H1 (cell line): ENCODE measurements at regions of chr4 and their contacts with region 1.

Region 1: DNA sequence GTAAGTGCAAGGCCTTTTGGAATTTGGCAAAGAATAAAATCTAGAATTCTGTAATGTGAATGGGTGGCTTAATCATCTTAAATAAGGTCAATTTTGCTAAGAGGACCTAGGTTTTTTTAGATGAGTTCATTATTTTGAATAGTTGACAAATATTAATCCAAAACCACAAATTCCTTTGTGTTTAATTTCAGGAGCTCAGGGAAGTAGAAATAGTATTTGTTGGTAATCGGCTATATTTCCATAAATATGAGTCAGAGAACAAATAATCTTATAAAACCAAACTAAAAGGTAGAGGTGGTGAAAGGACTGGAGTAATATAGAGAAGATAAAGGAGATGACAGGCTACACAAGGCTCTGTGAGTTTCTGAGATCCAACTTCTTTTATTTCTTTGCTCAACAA is 190.4 kb upstream of the TLL1 start:
- DNase-seq: no peak
- H3K4me3 ChIP-seq: no peak overlapping the region
- H3K27ac ChIP-seq: no peak overlapping the region
- H3K4me1 ChIP-seq: no peaks in the 10 kb centered on the region; a peak in 1 of 7 replicates
- H3K27me3 ChIP-seq: no peaks in the 10 kb centered on the region
- CTCF ChIP-seq: no peak
- EP300 ChIP-seq: no peak
- POLR2A ChIP-seq: no peak
- RAD21 ChIP-seq: no peak

Region 2: GRCh38 chr4:165656829-165657490 is 25.7 kb before region 1 on chr4:
- CTCF ChIA-PET with region 1: no interaction called
- POLR2A ChIA-PET with region 1: no interaction called
- DNase-seq: peak in 1 of 2 experiments; percentile 17
- H3K4me3 ChIP-seq: peak overlapping the region in 1 of 4 experiments; percentile 29; a peak in 1 of 8 replicates
- H3K27ac ChIP-seq: no peak overlapping the region
- H3K4me1 ChIP-seq: peaks cover 0 to 9% (median 1%) of the 10 kb centered on the region in 4 experiments; a peak in 2 of 7 replicates
- H3K27me3 ChIP-seq: no peaks in the 10 kb centered on the region
- CTCF ChIP-seq: no peak
- EP300 ChIP-seq: no peak; a peak in 1 of 3 replicates
- POLR2A ChIP-seq: no peak
- RAD21 ChIP-seq: no peak

Region 3: GRCh38 chr4:165668694-165669093 is 13.9 kb before region 1 on chr4:
- CTCF ChIA-PET with region 1: interaction called, 14 read pairs
- POLR2A ChIA-PET with region 1: no interaction called
- DNase-seq: no peak
- H3K4me3 ChIP-seq: no peak overlapping the region
- H3K27ac ChIP-seq: no peak overlapping the region
- H3K4me1 ChIP-seq: peaks cover 0 to 5% (median 3%) of the 10 kb centered on the region in 4 experiments; a peak in 2 of 7 replicates
- H3K27me3 ChIP-seq: no peaks in the 10 kb centered on the region
- CTCF ChIP-seq: no peak
- EP300 ChIP-seq: peak in 1 of 2 experiments; percentile 63; a peak in 1 of 3 replicates
- POLR2A ChIP-seq: no peak
- RAD21 ChIP-seq: no peak